ENCODE measurements at regions of chr10 and their contacts with region 1.

Region 1: GRCh38 chr10:7649673-7650300 is 17.0 kb downstream of the ITIH5 start:
- DNase-seq: no peak
- H3K4me3 ChIP-seq: no peak overlapping the region
- CTCF ChIP-seq: no peak

Region 2: DNA sequence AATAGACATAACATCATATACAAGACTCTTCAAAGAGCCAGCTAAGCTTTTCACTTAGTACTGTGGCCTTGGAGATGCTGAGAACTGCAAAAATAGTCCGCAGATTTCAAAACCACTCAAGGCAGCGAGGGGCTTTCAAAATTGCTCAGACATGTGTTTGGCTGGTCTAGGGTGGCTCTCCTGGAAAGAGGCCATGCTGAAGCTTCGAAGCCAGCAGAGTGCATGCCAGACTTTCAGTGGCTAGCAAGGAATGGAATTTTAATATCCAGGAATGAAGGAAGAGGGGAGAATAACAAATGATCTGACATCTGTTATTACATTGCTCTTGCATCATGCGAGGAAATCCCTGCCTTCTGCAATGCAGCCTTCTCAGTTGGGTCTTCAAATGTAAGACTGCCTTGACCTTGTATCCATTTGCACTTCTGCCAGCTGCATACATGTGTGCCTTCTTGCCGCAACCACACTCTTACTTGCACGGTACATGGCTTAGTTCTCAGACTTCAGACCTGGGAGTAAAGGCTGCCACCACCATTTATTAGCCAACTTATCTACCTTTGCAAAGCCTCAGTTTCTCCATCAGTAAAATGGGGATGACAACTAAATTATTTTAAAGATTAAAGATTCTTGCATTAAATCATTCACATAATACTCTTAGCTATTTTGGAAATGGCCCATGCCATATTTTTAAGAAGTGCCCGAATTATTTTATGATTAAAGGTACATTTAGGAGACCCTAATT is 39.0 kb before region 1 on chr10:
- in situ Hi-C with region 1: loop called (anchors 5 kb)
- DNase-seq: peak; percentile 55
- H3K4me3 ChIP-seq: no peak overlapping the region
- CTCF ChIP-seq: no peak

Region 3: GRCh38 chr10:7622969-7623368 is 26.8 kb before region 1 on chr10:
- in situ Hi-C with region 1: no loop called
- DNase-seq: no peak
- H3K4me3 ChIP-seq: no peak overlapping the region
- CTCF ChIP-seq: no peak

Region 4: GRCh38 chr10:7687228-7687907 is 37.6 kb after region 1 on chr10:
- in situ Hi-C with region 1: loop called (anchors 5 kb)
- DNase-seq: peak; percentile 87
- H3K4me3 ChIP-seq: no peak overlapping the region
- CTCF ChIP-seq: peak; percentile 94

Measured in astrocyte of the cerebellum (primary cell).